Tibial artery (tissue), 4 donors: ENCODE measurements at regions of chr1 and their contacts with region 1.

Region 1: DNA sequence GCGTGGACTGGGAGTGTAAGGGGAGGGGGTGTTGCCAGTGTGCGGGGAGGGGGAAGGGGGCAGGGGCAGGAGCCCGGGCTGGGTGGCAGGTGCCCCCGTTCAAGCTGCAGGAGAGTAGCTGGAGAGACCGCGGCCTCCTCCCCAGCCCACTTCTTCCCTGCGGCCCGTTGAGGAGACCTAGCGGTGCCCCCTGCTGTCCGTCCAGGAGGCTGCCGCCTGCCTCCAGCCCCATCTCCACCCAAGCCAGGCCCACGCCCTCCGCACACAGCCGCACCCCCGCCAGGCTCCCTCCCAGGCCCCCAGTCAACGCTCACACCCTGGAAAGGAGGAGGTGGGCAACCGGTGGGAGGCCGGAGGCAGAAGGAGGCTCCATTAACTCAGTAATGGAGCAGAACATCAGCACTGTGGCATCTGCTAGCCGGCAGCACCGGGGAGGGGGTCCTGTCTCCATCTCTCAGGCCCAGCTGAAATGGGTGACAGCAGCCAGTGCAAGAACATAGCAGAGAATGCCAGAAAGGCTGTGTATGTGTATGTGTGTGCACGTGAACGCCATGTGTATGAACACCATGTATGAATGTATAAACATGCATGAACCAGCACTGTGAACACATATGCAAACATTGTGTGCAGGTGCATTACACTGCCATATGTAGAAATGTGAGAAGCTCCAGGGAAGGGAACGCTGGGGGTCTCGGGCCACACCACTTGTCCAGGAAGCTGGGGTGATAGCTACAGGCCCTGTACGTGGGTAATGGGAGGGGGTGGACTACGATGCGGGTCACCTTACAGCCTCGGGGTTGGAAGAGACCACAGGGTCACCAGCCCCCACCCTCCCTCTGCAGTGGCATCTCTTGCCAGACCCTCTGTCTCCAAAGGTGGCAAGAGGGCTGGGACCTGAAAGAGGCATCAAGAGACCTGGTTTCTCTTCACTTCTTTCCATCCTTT is 84.6 kb downstream of the SYT2 start:
- DNase-seq: peak; percentile 51 to 82
- H3K4me3 ChIP-seq: no peak overlapping the region
- H3K27ac ChIP-seq: no peak overlapping the region
- H3K4me1 ChIP-seq: peaks cover 0 to 35% (median 16%) of the 10 kb centered on the region in 4 donors
- H3K27me3 ChIP-seq: peaks cover 0 to 16% of the 10 kb centered on the region in 2 donors
- CTCF ChIP-seq: peak; percentile 73 to 75

Region 2: DNA sequence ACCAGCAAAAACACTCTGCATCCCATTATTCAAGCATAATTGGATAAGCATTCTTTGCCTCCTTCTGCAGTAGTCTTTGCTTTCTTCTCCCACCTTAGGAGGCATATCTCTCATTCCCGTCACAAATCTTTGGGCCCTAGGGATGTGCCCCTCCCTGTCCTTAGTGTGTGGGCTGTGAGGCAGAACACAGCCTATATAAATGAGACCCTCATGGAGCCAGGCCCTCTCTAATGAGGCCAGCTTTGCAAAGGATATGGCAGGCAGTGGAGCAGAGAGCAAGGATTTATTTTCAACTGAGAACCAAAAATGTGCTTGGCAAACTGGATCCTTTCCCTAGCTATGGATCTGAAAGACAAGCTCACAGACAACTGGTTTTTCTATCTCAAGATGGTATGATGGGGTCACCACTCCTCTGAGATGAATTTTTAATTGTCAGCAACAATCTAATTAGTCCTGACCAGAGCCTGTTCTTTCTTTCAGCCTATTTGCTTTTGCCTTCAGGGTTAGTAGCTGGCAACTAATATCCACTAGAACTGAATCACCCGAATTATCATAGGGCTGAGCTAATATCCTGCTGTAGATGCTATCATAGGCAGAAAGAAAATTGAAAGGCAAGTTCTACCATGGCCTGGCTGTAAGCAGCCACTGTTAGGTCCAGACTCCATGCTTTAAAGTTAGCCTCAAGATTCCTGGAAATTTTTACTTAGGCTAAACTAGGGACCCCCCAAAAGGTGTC is 49.6 kb before region 1 on chr1:
- intact Hi-C with region 1: loop called (anchors 2 kb)
- DNase-seq: no peak
- H3K4me3 ChIP-seq: no peak overlapping the region
- H3K27ac ChIP-seq: peak overlapping the region; percentile 68 to 95
- H3K4me1 ChIP-seq: peaks cover 0 to 92% (median 65%) of the 10 kb centered on the region in 4 donors
- H3K27me3 ChIP-seq: no peaks in the 10 kb centered on the region
- CTCF ChIP-seq: no peak

Region 3: GRCh38 chr1:202760589-202760988 is 134.9 kb after region 1 on chr1:
- intact Hi-C with region 1: no loop called
- DNase-seq: no peak
- H3K4me3 ChIP-seq: no peak overlapping the region
- H3K27ac ChIP-seq: no peak overlapping the region
- H3K4me1 ChIP-seq: no peaks in the 10 kb centered on the region
- H3K27me3 ChIP-seq: no peaks in the 10 kb centered on the region
- CTCF ChIP-seq: no peak